Heart left ventricle (tissue), 16 donors: ENCODE measurements at regions of chr4 and their contacts with region 1.

Region 1: GRCh38 chr4:77385124-77385969 is 220.3 kb upstream of the CXCL13 start:
- DNase-seq: peak in 4 of 5 donors; percentile 43 to 60 (median 52)
- ATAC-seq: peak; percentile 61 to 83 (median 78)
- H3K4me3 ChIP-seq: no peak overlapping the region
- H3K27ac ChIP-seq: no peak overlapping the region
- H3K4me1 ChIP-seq: peaks cover 0 to 5% (median 0%) of the 10 kb centered on the region in 12 donors
- H3K27me3 ChIP-seq: no peaks in the 10 kb centered on the region
- CTCF ChIP-seq: peak; percentile 63 to 89 (median 80)
- POLR2A ChIP-seq: no peak

Region 2: DNA sequence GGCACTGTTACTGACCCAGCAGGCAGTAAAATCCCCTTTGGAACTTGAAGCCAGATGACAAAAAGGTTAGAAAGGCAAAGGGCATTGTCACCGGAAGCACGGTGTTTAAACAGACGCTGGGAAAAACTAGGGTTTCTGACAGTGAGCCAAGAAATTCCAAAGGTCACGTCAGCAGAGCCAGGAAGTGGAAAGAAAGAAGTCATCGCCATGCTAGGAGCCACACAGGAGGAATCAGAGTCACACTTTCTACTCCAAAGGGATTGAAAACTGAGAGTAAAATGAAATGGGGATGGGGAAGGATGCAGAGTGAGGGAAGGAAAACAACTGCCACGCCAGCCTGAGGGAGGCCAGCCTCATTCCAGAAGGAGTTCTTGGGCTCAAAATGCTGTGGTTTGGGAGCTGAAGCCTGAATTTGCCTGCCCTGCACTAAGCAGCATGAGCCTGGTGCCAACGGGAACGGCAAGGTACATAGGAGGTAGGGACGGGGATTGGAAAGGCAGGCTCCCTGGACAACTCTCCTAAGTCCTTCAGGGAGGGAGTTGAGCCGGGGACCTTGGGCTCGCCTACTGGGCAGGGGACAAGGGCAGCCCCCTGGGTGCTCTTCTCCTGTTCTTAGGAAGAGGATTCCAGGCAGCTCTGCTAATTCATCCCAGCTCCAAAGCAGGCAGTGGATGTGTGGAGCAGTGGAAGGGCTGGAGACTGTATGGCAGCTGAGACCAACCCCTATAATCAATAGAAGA is 554.2 kb before region 1 on chr4:
- intact Hi-C with region 1: no loop called
- DNase-seq: peak in 3 of 5 donors; percentile 45 to 71 (median 63)
- ATAC-seq: peak; percentile 72 to 93 (median 91)
- H3K4me3 ChIP-seq: no peak overlapping the region
- H3K27ac ChIP-seq: peak overlapping the region; percentile 3 to 89 (median 70)
- H3K4me1 ChIP-seq: peaks cover 4 to 24% (median 21%) of the 10 kb centered on the region in 12 donors
- H3K27me3 ChIP-seq: no peaks in the 10 kb centered on the region
- CTCF ChIP-seq: no peak
- POLR2A ChIP-seq: no peak

Region 3: GRCh38 chr4:77433418-77433733 is 48.0 kb after region 1 on chr4:
- intact Hi-C with region 1: loop called (anchors 1 to 5 kb)
- DNase-seq: peak in 1 of 5 donors; percentile 23
- ATAC-seq: peak in 3 of 4 donors; percentile 59 to 85 (median 80)
- H3K4me3 ChIP-seq: peak overlapping the region in 1 of 12 donors; percentile 25
- H3K27ac ChIP-seq: peak overlapping the region in 1 of 12 donors; percentile 31
- H3K4me1 ChIP-seq: peaks cover 0 to 28% (median 7%) of the 10 kb centered on the region in 12 donors
- H3K27me3 ChIP-seq: no peaks in the 10 kb centered on the region
- CTCF ChIP-seq: peak; percentile 39 to 74 (median 58)
- POLR2A ChIP-seq: no peak

Region 4: DNA sequence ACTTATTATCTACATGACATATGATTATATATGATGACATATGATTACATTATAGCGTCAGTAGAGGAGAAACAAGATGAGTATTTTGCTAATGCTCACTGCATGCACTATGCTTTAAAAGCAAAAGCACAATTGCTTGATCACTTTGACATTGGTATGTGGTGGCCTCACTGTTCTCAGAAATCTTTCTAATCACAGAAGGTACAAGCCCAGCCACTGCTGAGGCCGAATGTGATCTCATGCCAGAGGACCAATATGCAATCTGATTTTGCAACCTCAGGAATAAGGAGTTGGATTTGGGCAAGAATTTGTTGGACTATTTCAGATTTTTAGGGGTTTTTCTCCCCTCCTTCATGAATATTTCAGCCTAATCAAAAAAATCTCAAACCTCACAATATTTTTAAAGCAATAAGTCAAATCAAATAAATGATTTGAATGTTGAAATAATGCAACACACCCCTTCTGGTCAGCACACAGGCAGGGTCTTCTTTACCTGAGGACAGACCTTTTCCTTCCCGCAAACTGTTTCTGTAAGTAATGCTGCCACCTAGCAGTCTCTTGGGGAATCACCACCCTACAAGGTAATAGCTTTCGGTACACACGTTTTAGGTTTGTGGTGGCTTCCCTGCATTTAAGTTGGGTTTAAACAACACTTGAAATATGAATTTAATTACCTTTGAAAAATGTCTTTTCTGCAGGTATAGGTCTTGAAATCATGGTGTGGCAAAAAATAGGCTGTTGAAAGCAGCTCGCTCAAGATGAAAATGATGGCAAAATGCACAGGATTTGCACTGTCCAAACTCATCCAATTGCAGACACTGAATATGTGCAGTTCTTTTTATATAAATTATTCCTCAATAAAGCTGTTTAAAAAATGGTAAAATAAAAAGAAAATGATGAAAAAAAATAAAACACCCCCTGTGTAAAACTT is 215.4 kb after region 1 on chr4:
- intact Hi-C with region 1: loop called (anchors 1 to 5 kb)
- DNase-seq: no peak
- ATAC-seq: no peak
- H3K4me3 ChIP-seq: no peak overlapping the region
- H3K27ac ChIP-seq: no peak overlapping the region
- H3K4me1 ChIP-seq: no peaks in the 10 kb centered on the region
- H3K27me3 ChIP-seq: peaks cover 0 to 2% (median 0%) of the 10 kb centered on the region in 9 donors
- CTCF ChIP-seq: peak; percentile 62 to 80 (median 73)
- POLR2A ChIP-seq: no peak

Region 5: DNA sequence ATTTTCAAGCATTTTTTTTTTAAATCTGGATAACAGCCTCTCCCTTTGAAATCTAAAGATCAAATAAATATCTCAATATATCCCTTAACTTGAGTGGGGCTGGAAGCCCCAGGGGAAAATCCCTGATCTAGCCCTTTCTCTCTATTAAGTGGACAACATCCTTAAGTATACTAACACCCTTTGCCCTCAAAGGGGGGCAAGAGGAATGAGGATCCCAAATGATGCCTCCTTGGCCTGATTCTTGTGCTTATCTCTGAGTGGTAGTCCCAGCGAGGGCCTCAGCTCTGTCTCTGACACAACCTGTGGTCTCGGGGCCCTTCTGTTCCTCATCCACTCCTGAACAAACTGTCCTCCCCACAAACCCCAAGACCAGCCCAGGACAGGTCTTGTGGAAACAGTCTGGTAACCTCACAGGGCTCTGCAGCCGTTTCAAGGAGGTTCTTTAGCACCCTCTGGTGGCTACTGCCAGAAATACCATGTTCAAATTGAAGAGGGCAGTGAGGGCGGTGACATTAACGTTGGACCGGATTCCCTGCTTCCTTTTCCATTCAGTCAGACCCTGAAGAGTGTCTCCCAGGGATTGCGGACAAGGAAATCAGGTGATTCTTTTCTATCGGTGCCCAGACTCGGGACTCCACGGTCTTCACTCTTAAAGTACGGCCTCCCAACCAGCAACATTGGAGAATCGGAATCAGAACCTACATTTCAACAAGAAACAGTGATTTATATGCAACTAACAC is 233.2 kb after region 1 on chr4:
- intact Hi-C with region 1: loop called in 8 of 10 experiments (anchors 1 to 5 kb)
- DNase-seq: peak in 4 of 5 donors; percentile 45 to 69 (median 60)
- ATAC-seq: peak; percentile 61 to 95 (median 92)
- H3K4me3 ChIP-seq: no peak overlapping the region
- H3K27ac ChIP-seq: no peak overlapping the region
- H3K4me1 ChIP-seq: peaks cover 0 to 4% (median 0%) of the 10 kb centered on the region in 12 donors
- H3K27me3 ChIP-seq: peaks cover 0 to 7% (median 0%) of the 10 kb centered on the region in 9 donors
- CTCF ChIP-seq: peak; percentile 70 to 89 (median 79)
- POLR2A ChIP-seq: no peak

Region 6: GRCh38 chr4:77697860-77698590 is 312.7 kb after region 1 on chr4:
- intact Hi-C with region 1: loop called in 2 of 10 experiments (anchors 2 to 10 kb)
- DNase-seq: no peak
- ATAC-seq: peak; percentile 76 to 94 (median 80)
- H3K4me3 ChIP-seq: peak overlapping the region in 1 of 12 donors; percentile 22
- H3K27ac ChIP-seq: peak overlapping the region in 1 of 12 donors; percentile 2
- H3K4me1 ChIP-seq: peaks cover 0 to 21% (median 2%) of the 10 kb centered on the region in 12 donors
- H3K27me3 ChIP-seq: no peaks in the 10 kb centered on the region
- CTCF ChIP-seq: peak in 7 of 12 donors; percentile 15 to 50 (median 33)
- POLR2A ChIP-seq: no peak